ENCODE measurements at regions of chr13 and their contacts with region 1.

Region 1: GRCh38 chr13:80037505-80037888 is 303.4 kb downstream of the SPRY2 start:
- DNase-seq: no peak
- ATAC-seq: peak; percentile 67
- H3K4me3 ChIP-seq: no peak overlapping the region
- H3K27ac ChIP-seq: no peak overlapping the region
- H3K4me1 ChIP-seq: peaks cover 8% of the 10 kb centered on the region; the same call in 1 of the 2 replicates
- H3K27me3 ChIP-seq: no peaks in the 10 kb centered on the region
- CTCF ChIP-seq: no peak
- EP300 ChIP-seq: no peak
- POLR2A ChIP-seq: no peak
- RAD21 ChIP-seq: no peak

Region 2: GRCh38 chr13:79519255-79519654 is 518.2 kb before region 1 on chr13:
- CTCF ChIA-PET with region 1: no interaction called
- POLR2A ChIA-PET with region 1: no interaction called
- RAD21 ChIA-PET with region 1: no interaction called
- SMC1A ChIA-PET with region 1: no interaction called
- in situ Hi-C with region 1: no loop called
- intact Hi-C with region 1: no loop called
- DNase-seq: no peak
- ATAC-seq: no peak
- H3K4me3 ChIP-seq: no peak overlapping the region
- H3K27ac ChIP-seq: no peak overlapping the region
- H3K4me1 ChIP-seq: no peaks in the 10 kb centered on the region; the same call in 1 of the 2 replicates
- H3K27me3 ChIP-seq: no peaks in the 10 kb centered on the region
- CTCF ChIP-seq: no peak
- EP300 ChIP-seq: no peak
- POLR2A ChIP-seq: no peak
- RAD21 ChIP-seq: no peak

Region 3: GRCh38 chr13:79901336-79901735 is 136.2 kb before region 1 on chr13:
- CTCF ChIA-PET with region 1: no interaction called
- POLR2A ChIA-PET with region 1: no interaction called
- RAD21 ChIA-PET with region 1: no interaction called
- SMC1A ChIA-PET with region 1: no interaction called
- in situ Hi-C with region 1: no loop called
- intact Hi-C with region 1: no loop called
- DNase-seq: no peak
- ATAC-seq: no peak
- H3K4me3 ChIP-seq: no peak overlapping the region
- H3K27ac ChIP-seq: no peak overlapping the region
- H3K4me1 ChIP-seq: no peaks in the 10 kb centered on the region
- H3K27me3 ChIP-seq: no peaks in the 10 kb centered on the region
- CTCF ChIP-seq: 0 out of 6 replicates have a peak, but pooled peaks of 1 of the 3 experiments have one; percentile 6
- EP300 ChIP-seq: no peak
- POLR2A ChIP-seq: no peak
- RAD21 ChIP-seq: 0 out of 2 replicates have a peak, but pooled peaks have one; percentile 11

Region 4: GRCh38 chr13:80251403-80251802 is 213.9 kb after region 1 on chr13:
- CTCF ChIA-PET with region 1: no interaction called
- POLR2A ChIA-PET with region 1: no interaction called
- RAD21 ChIA-PET with region 1: no interaction called
- SMC1A ChIA-PET with region 1: no interaction called
- in situ Hi-C with region 1: no loop called
- intact Hi-C with region 1: loop called (anchors 5 kb)
- DNase-seq: no peak
- ATAC-seq: peak; percentile 44
- H3K4me3 ChIP-seq: no peak overlapping the region
- H3K27ac ChIP-seq: no peak overlapping the region
- H3K4me1 ChIP-seq: no peaks in the 10 kb centered on the region
- H3K27me3 ChIP-seq: no peaks in the 10 kb centered on the region
- CTCF ChIP-seq: no peak; a peak in 1 of 6 replicates
- EP300 ChIP-seq: no peak
- POLR2A ChIP-seq: no peak
- RAD21 ChIP-seq: peak; percentile 6; the same call in 1 of the 2 replicates